ENCODE measurements at regions of chr9 and their contacts with region 1.

Region 1: GRCh38 chr9:114348906-114349482 is 19.3 kb downstream of the ORM2 start:
- DNase-seq: peak; percentile 70
- H3K4me3 ChIP-seq: no peak overlapping the region
- H3K27ac ChIP-seq: peak overlapping the region; percentile 68 to 79 (median 71)
- H3K4me1 ChIP-seq: peaks cover 6 to 20% (median 8%) of the 10 kb centered on the region in 4 donors
- H3K27me3 ChIP-seq: no peaks in the 10 kb centered on the region
- CTCF ChIP-seq: no peak
- EP300 ChIP-seq: no peak
- POLR2A ChIP-seq: no peak

Region 2: GRCh38 chr9:114282926-114283325 is 66.1 kb before region 1 on chr9:
- in situ Hi-C with region 1: no loop called
- intact Hi-C with region 1: no loop called
- DNase-seq: no peak
- H3K4me3 ChIP-seq: no peak overlapping the region
- H3K27ac ChIP-seq: no peak overlapping the region
- H3K4me1 ChIP-seq: no peaks in the 10 kb centered on the region
- H3K27me3 ChIP-seq: no peaks in the 10 kb centered on the region
- CTCF ChIP-seq: no peak
- EP300 ChIP-seq: no peak
- POLR2A ChIP-seq: no peak

Region 3: GRCh38 chr9:114397848-114398605 is 49.0 kb after region 1 on chr9:
- in situ Hi-C with region 1: no loop called
- intact Hi-C with region 1: loop called (anchors 10 kb)
- DNase-seq: peak; percentile 99
- H3K4me3 ChIP-seq: peak overlapping the region; percentile 49 to 80 (median 68)
- H3K27ac ChIP-seq: peak overlapping the region; percentile 90 to 92 (median 91)
- H3K4me1 ChIP-seq: peaks cover 13 to 62% (median 44%) of the 10 kb centered on the region in 4 donors
- H3K27me3 ChIP-seq: no peaks in the 10 kb centered on the region
- CTCF ChIP-seq: peak in 2 of 5 experiments; percentile 31 to 38
- EP300 ChIP-seq: no peak
- POLR2A ChIP-seq: peak; percentile 92

Region 4: GRCh38 chr9:114641967-114642366 is 293.0 kb after region 1 on chr9:
- in situ Hi-C with region 1: no loop called
- intact Hi-C with region 1: loop called (anchors 10 kb)
- DNase-seq: no peak
- H3K4me3 ChIP-seq: no peak overlapping the region
- H3K27ac ChIP-seq: no peak overlapping the region
- H3K4me1 ChIP-seq: no peaks in the 10 kb centered on the region
- H3K27me3 ChIP-seq: no peaks in the 10 kb centered on the region
- CTCF ChIP-seq: no peak
- EP300 ChIP-seq: no peak
- POLR2A ChIP-seq: no peak

Region 5: GRCh38 chr9:114930056-114930812 is 581.2 kb after region 1 on chr9 and contains the start of gene TNFSF8:
- in situ Hi-C with region 1: no loop called
- intact Hi-C with region 1: no loop called
- DNase-seq: peak; percentile 35
- H3K4me3 ChIP-seq: peak within 1 kb of the TSS in 2 of 4 donors; percentile 17 to 33
- H3K27ac ChIP-seq: peak within 1 kb of the TSS; percentile 41 to 69 (median 58)
- H3K4me1 ChIP-seq: no peaks in the 10 kb centered on the region
- H3K27me3 ChIP-seq: no peaks in the 10 kb centered on the region
- CTCF ChIP-seq: no peak
- EP300 ChIP-seq: no peak
- POLR2A ChIP-seq: peak; percentile 56
- total RNA-seq, gene TNFSF8: 1.2 to 5.2 TPM in 2 of 4 donors, not detected in the others

Measured in transverse colon (tissue), 4 donors.